HEK293T (cell line): ENCODE measurements at regions of chr4 and their contacts with region 1.

Region 1: DNA sequence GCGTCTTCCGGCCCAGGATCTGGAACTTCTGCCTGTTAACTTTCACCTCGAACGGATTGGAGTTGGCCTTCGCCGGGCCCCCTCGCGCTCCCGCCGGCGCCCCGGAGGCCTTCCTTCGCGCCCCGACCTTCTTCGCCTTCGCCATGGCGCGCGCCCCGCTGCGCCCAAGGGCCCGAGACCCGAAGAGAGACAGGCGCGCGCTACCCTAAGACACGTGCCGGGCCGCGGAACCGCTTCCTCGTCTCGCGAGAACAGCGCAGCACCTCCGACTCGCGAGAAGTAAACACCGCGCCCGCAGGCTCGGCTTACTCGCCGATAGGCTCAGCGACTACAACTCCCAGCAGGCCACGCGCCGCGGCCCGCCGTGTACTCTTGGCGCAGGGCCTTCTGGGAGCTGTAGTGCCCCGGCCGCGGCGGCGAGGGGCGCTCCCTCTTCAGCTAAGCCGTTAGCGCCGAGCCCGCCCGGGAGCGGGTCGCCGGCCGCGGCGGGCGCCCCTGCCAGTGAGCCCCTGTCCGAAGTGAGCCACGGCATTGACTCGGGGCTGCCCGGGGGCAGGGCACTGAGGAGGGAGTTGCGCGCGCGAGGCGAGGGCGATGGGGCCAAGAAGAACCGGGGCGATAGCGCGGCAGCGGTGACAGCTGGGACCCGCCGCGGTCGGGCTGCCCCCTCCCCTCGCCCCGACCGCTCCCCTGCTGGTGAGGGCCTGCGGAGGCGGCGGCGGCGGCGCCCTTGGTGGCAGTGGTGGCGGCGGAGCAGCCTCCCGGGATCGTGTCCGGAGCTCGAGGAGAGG is at the starts of genes GRK4 and NOP14:
- DNase-seq: peak; percentile 98

Region 2: DNA sequence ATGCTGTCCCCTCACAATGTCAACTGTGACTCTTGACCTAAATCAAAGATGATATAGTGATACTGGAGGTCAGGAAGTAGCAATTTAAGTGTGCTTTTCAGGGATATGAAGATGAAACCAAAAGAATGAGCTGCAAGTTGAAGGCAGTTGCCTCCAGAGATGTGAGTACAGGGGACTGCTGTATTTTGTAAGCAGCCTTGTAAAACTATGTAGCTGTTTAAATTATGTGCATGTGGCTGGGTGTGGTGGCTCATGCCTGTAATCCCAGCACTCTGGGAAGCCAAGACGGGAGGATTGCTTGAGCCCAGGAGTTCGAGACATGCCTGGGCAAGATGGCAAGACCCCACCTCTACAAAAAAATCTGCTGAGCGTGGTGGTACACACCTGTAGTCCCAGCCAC is 192.1 kb before region 1 on chr4:
- CTCF ChIA-PET with region 1: no interaction called
- POLR2A ChIA-PET with region 1: no interaction called
- DNase-seq: no peak

Region 3: DNA sequence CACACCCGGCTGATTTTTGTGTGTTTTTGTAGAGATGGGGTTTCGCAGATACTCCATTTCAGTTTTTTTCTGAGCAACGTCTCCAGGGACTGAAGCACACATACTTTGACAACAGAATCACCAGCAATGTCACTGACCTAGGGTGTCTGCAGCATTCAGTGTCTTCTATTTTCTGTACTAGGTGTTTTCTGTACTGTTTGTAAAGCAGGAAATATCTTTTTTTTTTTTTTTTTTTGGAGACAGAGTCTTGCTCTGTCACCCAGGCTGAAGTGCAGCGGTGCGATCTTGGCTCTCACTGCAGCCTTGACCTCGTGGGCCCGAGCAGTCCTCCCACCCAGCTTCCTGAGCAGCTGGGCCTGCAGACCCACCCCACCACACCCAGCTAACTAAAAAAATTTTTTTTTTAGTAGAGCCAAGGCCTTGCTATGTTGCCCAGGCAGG is 110.9 kb before region 1 on chr4:
- CTCF ChIA-PET with region 1: no interaction called
- POLR2A ChIA-PET with region 1: no interaction called
- DNase-seq: no peak

Region 4: GRCh38 chr4:2934813-2935761 is 28.3 kb before region 1 on chr4:
- CTCF ChIA-PET with region 1: no interaction called
- POLR2A ChIA-PET with region 1: interaction called, 34 read pairs
- DNase-seq: peak; percentile 97

Region 5: DNA sequence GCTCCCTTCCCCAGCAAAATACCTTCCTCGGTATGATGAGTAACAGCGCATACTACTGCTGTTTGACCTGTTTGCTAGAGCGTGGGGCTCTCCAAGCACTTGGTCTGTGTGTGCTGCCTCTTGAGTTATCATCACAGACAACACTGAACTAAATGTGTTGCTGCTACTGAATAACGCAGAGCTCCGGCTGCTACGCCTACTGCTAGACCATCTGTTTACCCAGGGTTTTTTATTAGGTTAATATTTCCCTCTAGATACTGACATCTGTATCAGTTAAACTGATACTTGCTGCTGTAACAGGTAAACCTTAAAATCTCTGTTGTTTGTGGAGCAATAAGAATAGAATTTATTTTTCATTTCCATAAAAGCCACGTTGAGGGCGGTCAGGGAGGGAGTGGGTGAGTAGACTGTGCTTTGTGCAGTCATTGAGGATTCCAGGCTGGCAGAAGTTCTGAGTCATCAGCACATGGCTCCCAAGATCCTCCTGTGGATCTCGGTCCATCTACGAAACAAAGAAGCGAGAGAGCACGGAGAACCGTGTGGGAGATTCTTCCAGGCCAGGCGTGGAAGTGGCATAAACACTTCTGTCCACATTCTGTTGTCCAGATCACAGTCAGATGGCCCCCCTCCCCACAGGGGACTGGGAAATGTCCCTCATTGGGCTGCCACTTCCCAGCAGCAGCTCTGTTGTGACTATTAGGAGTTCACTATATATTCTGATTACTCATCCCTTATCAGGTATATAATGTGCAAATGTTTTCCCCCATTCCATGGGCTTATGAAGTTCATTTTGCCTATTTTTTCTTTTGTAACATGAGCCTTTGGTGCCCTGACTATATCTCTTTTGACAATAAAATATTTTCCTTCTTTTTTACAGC is 14.1 kb after region 1 on chr4:
- CTCF ChIA-PET with region 1: interaction called, 10 read pairs
- POLR2A ChIA-PET with region 1: interaction called, 10 read pairs
- DNase-seq: no peak